Stomach (tissue), 19 donors: ENCODE measurements at regions of chr2 and their contacts with region 1.

Region 1: DNA sequence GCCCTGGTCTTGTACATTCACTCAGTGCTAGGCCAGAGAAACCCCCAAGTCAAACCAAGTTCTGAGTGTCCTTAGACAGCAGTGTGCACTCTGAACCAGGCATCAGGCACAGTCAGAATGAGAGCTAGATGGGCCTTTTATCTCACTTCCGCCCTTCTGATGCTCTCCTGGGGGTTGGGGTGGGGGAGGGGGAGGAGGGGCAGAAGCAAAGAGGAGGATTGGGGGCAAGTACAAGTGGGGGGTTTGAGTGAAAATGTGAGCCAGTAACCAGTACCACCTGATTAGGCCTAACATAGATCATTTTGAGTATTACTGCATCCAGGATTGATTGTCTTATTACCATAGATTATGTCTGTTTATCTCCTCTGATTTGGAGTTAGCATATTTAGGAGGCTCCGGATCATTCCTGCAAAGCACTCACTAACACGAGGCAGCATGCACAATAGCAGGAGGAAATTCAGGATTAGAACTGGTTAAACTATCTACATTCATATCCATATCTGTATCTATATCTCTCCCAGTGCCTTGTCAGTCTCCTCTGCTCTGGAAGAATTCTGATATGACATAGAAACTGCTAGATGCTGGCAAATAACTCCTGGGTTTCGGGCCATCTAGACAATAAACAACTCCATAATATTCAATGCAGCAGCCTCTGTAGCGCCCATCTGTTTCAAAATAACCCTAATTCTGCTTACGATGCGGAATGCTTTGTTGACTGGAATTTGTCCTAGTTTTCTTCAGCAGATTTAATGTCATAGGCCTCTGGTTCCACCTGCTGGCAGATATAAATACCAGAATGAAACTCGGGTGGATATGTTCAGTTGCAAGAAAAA is 149.1 kb downstream of the RHBDD1 start:
- DNase-seq: peak in 1 of 2 donors; percentile 90
- H3K4me3 ChIP-seq: no peak overlapping the region
- H3K27ac ChIP-seq: peak overlapping the region in 3 of 5 donors; percentile 3 to 40 (median 9)
- H3K4me1 ChIP-seq: peaks cover 0 to 14% (median 6%) of the 10 kb centered on the region in 4 donors
- H3K27me3 ChIP-seq: no peaks in the 10 kb centered on the region
- CTCF ChIP-seq: peak in 5 of 7 experiments; percentile 29 to 66 (median 48)
- EP300 ChIP-seq: no peak
- POLR2A ChIP-seq: no peak

Region 2: DNA sequence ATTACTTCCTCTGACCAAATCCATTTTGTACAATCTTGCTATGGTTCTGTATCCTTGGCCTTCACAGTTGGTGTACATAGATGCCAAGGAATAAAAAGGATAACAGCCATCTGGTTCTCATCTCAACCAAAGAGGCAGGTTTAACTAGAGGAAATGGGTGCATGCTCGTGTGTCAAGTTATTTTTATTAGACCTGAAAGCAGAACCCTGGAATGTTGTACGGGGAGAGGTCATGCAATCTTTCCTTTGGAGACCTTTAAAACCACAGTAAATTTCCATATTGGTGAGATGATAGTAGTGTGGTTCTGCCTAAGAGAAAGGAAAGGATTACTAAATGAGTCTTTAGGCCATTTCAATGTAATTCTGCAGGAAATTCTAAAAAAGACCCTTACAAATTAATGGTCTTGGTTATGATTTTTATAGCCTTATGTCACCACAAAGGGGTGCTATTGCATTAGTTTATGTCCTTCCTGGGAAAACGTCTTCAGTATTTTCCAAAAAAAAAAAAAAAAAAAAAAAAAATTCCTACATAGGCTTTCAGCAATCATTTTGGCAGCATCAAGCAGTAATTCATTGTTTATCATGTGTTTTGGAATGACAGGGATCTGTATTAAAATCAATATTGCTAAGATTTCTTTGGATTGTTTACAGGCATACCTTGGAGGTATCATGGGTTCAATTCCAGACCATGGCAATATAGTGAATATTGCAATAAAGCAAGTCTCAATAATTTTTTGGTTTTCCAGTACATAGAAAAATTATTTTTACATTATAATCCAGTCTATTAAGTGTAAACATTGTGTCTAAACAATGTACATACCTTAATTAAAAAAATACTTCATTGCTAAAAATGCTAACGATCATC is 1314.6 kb before region 1 on chr2:
- intact Hi-C with region 1: loop called (anchors 10 kb)
- DNase-seq: peak in 1 of 2 donors; percentile 75
- H3K4me3 ChIP-seq: no peak overlapping the region
- H3K27ac ChIP-seq: no peak overlapping the region
- H3K4me1 ChIP-seq: peaks cover 0 to 4% (median 0%) of the 10 kb centered on the region in 4 donors
- H3K27me3 ChIP-seq: no peaks in the 10 kb centered on the region
- CTCF ChIP-seq: peak in 4 of 7 experiments; percentile 2 to 31 (median 18)
- EP300 ChIP-seq: no peak
- POLR2A ChIP-seq: no peak

Region 3: DNA sequence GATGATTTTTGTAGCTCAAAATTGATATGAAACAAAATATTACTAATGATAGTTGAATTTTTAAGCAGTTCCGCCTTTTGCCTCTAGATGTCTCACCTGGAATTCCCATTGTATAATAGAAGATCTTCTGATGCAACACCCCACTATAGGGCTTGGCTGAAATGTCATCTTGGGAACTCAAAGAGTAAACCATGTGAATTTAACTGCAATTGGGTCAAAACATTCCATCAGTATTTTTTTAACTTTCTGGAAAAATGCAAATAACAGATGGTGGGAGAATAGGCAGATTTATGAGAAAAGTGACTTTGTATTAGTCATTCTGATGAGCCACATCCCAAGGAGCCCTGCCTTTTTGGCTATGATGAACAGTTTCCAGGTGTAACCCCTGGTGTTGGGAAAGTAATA is 1095.5 kb before region 1 on chr2:
- intact Hi-C with region 1: loop called (anchors 10 kb)
- DNase-seq: peak in 1 of 2 donors; percentile 64
- H3K4me3 ChIP-seq: no peak overlapping the region
- H3K27ac ChIP-seq: no peak overlapping the region
- H3K4me1 ChIP-seq: peaks cover 0 to 5% (median 0%) of the 10 kb centered on the region in 4 donors
- H3K27me3 ChIP-seq: no peaks in the 10 kb centered on the region
- CTCF ChIP-seq: peak in 5 of 7 experiments; percentile 51 to 75 (median 65)
- EP300 ChIP-seq: no peak
- POLR2A ChIP-seq: no peak

Region 4: DNA sequence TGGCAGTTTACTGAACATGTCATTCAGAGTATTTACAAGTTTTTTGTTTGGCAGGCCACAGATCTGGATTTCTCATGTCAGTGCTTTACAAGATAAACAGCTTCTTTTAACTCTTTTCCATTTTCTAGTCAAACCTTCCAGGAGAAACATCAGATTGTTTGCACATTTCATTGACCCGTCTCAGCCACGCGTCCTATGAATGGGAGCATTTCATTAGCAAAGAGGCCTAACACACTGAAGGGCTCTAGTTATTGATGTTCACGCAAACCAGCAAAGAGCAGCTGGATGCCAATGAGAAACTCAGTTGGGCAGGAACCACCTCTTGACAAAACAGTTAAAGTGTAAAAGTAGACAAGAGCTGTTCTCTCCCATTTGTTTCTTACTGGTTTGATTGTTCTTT is 310.8 kb after region 1 on chr2:
- intact Hi-C with region 1: no loop called
- DNase-seq: no peak
- H3K4me3 ChIP-seq: no peak overlapping the region
- H3K27ac ChIP-seq: no peak overlapping the region
- H3K4me1 ChIP-seq: peaks cover 0 to 11% (median 3%) of the 10 kb centered on the region in 4 donors
- H3K27me3 ChIP-seq: no peaks in the 10 kb centered on the region
- CTCF ChIP-seq: no peak
- EP300 ChIP-seq: no peak
- POLR2A ChIP-seq: no peak